ENCODE measurements at regions of chr2 and their contacts with region 1.

Region 1: GRCh38 chr2:120559401-120559800 is 176.3 kb upstream of the GLI2 start:
- DNase-seq: peak; percentile 97
- H3K4me3 ChIP-seq: no peak overlapping the region
- H3K27ac ChIP-seq: peak overlapping the region; percentile 95
- H3K27me3 ChIP-seq: peaks cover 9% of the 10 kb centered on the region
- CTCF ChIP-seq: no peak

Region 2: GRCh38 chr2:120539937-120540718 is 19.3 kb before region 1 on chr2:
- CTCF ChIA-PET with region 1: no interaction called
- POLR2A ChIA-PET with region 1: interaction called, 23 read pairs
- DNase-seq: peak; percentile 76
- H3K4me3 ChIP-seq: no peak overlapping the region
- H3K27ac ChIP-seq: peak overlapping the region; percentile 70
- H3K27me3 ChIP-seq: peaks cover 26% of the 10 kb centered on the region
- CTCF ChIP-seq: no peak

Region 3: GRCh38 chr2:120546048-120546864 is 13.1 kb before region 1 on chr2:
- CTCF ChIA-PET with region 1: no interaction called
- POLR2A ChIA-PET with region 1: interaction called, 23 read pairs
- DNase-seq: peak; percentile 86
- H3K4me3 ChIP-seq: no peak overlapping the region
- H3K27ac ChIP-seq: peak overlapping the region; percentile 77
- H3K27me3 ChIP-seq: peaks cover 7% of the 10 kb centered on the region
- CTCF ChIP-seq: no peak

Region 4: DNA sequence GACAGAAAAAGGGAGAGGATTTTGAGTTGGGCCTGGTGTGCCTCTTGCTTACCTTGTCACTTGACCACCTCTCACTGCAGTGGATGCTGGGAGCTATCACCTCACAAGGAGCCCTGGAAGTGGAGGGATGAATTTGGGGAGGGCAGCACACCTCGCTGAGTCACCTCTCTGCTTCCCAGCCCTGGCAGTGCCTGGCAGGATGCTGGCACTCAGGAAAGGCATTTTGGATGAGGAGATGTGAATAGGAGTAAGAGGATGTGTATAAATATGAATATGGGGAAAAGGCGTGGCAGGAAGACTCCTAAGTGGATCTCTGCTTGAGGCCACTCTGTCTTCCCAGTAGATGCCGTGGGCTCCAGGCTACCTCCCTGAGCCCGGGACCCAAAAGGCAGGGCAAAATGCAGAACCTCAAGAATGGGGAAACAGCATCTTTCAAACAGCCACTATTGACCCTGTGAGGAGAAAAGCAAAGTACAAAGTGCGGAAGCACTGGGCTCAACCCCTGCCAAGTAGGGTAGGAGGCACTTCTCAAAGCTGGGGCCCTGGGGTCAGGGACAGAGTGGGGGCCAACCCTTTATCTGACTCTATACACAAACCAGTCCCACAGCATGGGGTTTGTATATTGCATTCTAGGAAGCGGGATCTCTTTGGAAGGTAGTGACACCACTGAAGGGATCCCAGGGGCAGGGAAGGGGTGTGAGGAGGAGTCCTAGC is 11.8 kb after region 1 on chr2:
- CTCF ChIA-PET with region 1: no interaction called
- POLR2A ChIA-PET with region 1: no interaction called
- DNase-seq: no peak
- H3K4me3 ChIP-seq: no peak overlapping the region
- H3K27ac ChIP-seq: no peak overlapping the region
- H3K27me3 ChIP-seq: peaks cover 26% of the 10 kb centered on the region
- CTCF ChIP-seq: no peak

Region 5: DNA sequence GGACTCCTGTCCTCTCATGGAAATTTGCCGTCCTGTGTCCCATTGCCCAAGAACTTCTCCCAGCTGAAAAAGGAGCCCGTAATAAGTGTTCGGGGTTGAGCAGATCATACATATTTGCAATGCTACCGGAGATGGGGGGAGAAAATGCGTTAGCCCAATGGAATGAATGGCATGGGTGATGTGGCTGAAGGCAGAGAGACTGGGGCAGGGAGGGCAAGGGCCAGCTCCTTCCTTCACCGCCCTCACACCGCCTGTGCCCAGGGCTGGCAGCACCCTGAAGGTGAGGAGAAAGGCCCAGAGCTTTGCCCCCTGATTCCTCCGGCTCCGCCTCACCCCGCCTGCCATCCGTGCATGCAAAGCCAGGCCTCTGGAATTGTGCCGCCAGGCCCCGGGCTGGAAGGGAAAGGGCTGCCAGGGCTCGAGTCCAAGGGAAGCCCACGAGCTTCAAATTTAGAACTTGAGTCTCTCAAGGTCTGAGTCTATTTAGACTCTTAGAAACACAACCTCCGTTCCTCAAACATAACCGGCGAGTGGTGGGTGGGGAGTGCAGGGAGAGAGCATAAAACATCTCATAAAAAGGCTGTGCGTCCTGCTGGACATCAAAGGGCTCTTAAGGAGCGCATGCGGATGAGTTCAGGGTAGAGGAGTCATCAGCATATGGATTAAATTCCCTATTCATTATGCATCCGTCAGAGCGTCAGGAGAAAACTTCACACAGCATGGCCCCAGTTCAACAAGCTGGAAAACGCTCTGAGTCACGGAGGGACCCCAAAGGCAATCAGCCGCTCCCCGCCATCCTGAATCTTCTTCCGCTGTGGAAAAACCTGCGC is 54.6 kb after region 1 on chr2:
- CTCF ChIA-PET with region 1: no interaction called
- POLR2A ChIA-PET with region 1: interaction called, 19 read pairs
- DNase-seq: peak; percentile 69
- H3K4me3 ChIP-seq: no peak overlapping the region
- H3K27ac ChIP-seq: peak overlapping the region; percentile 98
- H3K27me3 ChIP-seq: peaks cover 2% of the 10 kb centered on the region
- CTCF ChIP-seq: no peak

Measured in AG04450 (cell line).